Caco-2 (cell line): ENCODE measurements at regions of chrX and their contacts with region 1.

Region 1: GRCh38 chrX:9320940-9321339 is 143.9 kb upstream of the TBL1X start:
- DNase-seq: peak; percentile 40 to 55
- H3K4me3 ChIP-seq: no peak overlapping the region
- H3K4me3 Mint-ChIP-seq: no peak overlapping the region
- H3K27ac Mint-ChIP-seq: no peak overlapping the region
- H3K4me1 ChIP-seq: peaks cover 4% of the 10 kb centered on the region; the same call in 1 of the 2 replicates
- H3K4me1 Mint-ChIP-seq: peaks cover 6% of the 10 kb centered on the region
- H3K27me3 ChIP-seq: no peaks in the 10 kb centered on the region
- H3K27me3 Mint-ChIP-seq: no peaks in the 10 kb centered on the region
- CTCF ChIP-seq: no peak

Region 2: GRCh38 chrX:9211269-9211668 is 109.7 kb before region 1 on chrX:
- CTCF ChIA-PET with region 1: no interaction called
- POLR2A ChIA-PET with region 1: no interaction called
- intact Hi-C with region 1: no loop called
- DNase-seq: no peak
- H3K4me3 ChIP-seq: no peak overlapping the region
- H3K4me3 Mint-ChIP-seq: no peak overlapping the region
- H3K27ac Mint-ChIP-seq: no peak overlapping the region
- H3K4me1 ChIP-seq: no peaks in the 10 kb centered on the region
- H3K4me1 Mint-ChIP-seq: no peaks in the 10 kb centered on the region
- H3K27me3 ChIP-seq: no peaks in the 10 kb centered on the region
- H3K27me3 Mint-ChIP-seq: no peaks in the 10 kb centered on the region
- CTCF ChIP-seq: no peak

Region 3: DNA sequence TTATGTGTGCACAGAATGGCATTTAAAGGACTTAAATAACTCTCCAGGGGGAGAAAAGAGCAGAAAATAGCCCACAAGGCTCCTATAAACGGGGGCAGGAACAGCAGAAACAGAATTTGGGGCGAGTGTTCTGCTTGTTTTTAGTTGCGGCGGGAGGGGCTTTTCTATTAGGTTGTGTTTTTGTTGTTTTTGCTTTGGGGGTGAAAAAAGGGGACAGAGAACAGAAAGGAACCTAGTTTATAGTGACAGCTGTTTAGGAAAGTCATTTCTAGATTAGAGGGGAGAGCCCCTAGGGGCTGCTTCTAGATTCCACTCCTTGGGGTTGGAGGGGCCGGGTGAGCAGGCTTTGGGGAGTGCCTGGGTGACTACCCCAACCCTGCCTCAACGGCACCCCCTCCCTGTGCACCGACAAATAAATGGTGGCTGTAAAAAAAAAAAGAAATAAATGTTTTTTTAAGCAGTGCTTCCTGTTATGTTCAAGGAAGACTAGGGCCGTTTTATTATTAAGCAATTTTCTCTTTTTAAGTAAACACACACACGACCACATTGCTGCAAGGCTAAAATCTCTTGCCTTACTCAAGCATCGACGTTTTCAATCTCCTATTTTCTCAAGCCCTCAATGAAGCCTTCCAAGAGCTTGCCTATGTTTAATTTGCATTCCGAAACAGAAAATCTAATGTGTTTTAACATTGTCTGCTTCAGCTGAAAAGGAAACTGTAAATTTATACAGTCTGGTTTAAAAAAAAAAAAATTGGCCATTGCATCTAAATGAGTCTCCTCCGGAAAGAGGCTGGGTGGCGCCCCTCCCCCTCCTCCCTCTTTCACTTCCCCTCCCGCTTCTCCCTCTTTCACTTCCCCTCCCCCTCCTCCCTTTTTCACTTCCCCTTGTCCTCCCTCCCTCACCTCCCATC is 20.6 kb after region 1 on chrX:
- CTCF ChIA-PET with region 1: no interaction called
- POLR2A ChIA-PET with region 1: no interaction called
- intact Hi-C with region 1: loop called (anchors 2 kb)
- DNase-seq: no peak
- H3K4me3 ChIP-seq: no peak overlapping the region
- H3K4me3 Mint-ChIP-seq: no peak overlapping the region
- H3K27ac Mint-ChIP-seq: peak overlapping the region; percentile 39
- H3K4me1 ChIP-seq: no peaks in the 10 kb centered on the region
- H3K4me1 Mint-ChIP-seq: no peaks in the 10 kb centered on the region
- H3K27me3 ChIP-seq: no peaks in the 10 kb centered on the region
- H3K27me3 Mint-ChIP-seq: no peaks in the 10 kb centered on the region
- CTCF ChIP-seq: no peak

Region 4: DNA sequence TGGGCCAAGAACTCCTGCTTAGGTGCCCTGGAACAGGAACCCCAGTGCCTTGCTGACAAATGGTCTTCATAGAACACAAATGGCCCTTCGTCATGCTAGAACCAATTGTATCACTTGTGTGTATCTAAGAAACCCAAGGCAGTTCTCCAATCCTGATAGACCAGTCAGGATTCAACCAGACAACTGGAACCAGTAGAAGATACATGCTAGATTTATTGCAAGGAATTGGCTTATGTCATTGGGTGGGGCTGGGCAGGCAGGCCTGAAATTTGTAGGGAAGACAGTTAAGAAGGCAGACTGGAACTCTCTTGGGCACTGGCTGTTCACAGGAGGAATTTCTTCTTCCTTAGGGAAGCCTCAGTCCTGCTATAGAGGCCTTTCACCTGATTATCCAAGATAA is 127.0 kb after region 1 on chrX:
- CTCF ChIA-PET with region 1: no interaction called
- POLR2A ChIA-PET with region 1: no interaction called
- intact Hi-C with region 1: no loop called
- DNase-seq: no peak
- H3K4me3 ChIP-seq: no peak overlapping the region
- H3K4me3 Mint-ChIP-seq: no peak overlapping the region
- H3K27ac Mint-ChIP-seq: no peak overlapping the region
- H3K4me1 ChIP-seq: no peaks in the 10 kb centered on the region
- H3K4me1 Mint-ChIP-seq: no peaks in the 10 kb centered on the region
- H3K27me3 ChIP-seq: no peaks in the 10 kb centered on the region
- H3K27me3 Mint-ChIP-seq: no peaks in the 10 kb centered on the region
- CTCF ChIP-seq: no peak

Region 5: GRCh38 chrX:9542761-9543111 is 221.8 kb after region 1 on chrX:
- CTCF ChIA-PET with region 1: no interaction called
- POLR2A ChIA-PET with region 1: no interaction called
- intact Hi-C with region 1: no loop called
- DNase-seq: no peak
- H3K4me3 ChIP-seq: no peak overlapping the region
- H3K4me3 Mint-ChIP-seq: no peak overlapping the region
- H3K27ac Mint-ChIP-seq: no peak overlapping the region
- H3K4me1 ChIP-seq: 0 out of 2 replicates have a peak, but pooled peaks cover 4% of the 10 kb centered on the region
- H3K4me1 Mint-ChIP-seq: peaks cover 9% of the 10 kb centered on the region
- H3K27me3 ChIP-seq: no peaks in the 10 kb centered on the region
- H3K27me3 Mint-ChIP-seq: no peaks in the 10 kb centered on the region
- CTCF ChIP-seq: no peak